ENCODE measurements at regions of chr6 and their contacts with region 1.

Region 1: GRCh38 chr6:11064836-11065235 is 20.7 kb upstream of the ELOVL2 start:
- DNase-seq: no peak
- H3K4me3 ChIP-seq: no peak overlapping the region
- H3K27ac ChIP-seq: no peak overlapping the region
- H3K4me1 ChIP-seq: no peaks in the 10 kb centered on the region
- H3K27me3 ChIP-seq: peaks cover 0 to 8% (median 0%) of the 10 kb centered on the region in 7 donors
- CTCF ChIP-seq: no peak
- POLR2A ChIP-seq: no peak

Region 2: GRCh38 chr6:10478187-10479040 is 586.4 kb before region 1 on chr6:
- intact Hi-C with region 1: loop called (anchors 10 kb)
- DNase-seq: no peak
- H3K4me3 ChIP-seq: no peak overlapping the region
- H3K27ac ChIP-seq: no peak overlapping the region
- H3K4me1 ChIP-seq: no peaks in the 10 kb centered on the region
- H3K27me3 ChIP-seq: peaks cover 0 to 18% (median 0%) of the 10 kb centered on the region in 7 donors
- CTCF ChIP-seq: peak; percentile 29 to 75 (median 67)
- POLR2A ChIP-seq: no peak

Region 3: GRCh38 chr6:10800829-10801535 is 263.9 kb before region 1 on chr6:
- intact Hi-C with region 1: no loop called
- DNase-seq: peak; percentile 89
- H3K4me3 ChIP-seq: no peak overlapping the region
- H3K27ac ChIP-seq: no peak overlapping the region
- H3K4me1 ChIP-seq: no peaks in the 10 kb centered on the region
- H3K27me3 ChIP-seq: no peaks in the 10 kb centered on the region
- CTCF ChIP-seq: peak; percentile 75 to 97 (median 93)
- POLR2A ChIP-seq: no peak

Region 4: DNA sequence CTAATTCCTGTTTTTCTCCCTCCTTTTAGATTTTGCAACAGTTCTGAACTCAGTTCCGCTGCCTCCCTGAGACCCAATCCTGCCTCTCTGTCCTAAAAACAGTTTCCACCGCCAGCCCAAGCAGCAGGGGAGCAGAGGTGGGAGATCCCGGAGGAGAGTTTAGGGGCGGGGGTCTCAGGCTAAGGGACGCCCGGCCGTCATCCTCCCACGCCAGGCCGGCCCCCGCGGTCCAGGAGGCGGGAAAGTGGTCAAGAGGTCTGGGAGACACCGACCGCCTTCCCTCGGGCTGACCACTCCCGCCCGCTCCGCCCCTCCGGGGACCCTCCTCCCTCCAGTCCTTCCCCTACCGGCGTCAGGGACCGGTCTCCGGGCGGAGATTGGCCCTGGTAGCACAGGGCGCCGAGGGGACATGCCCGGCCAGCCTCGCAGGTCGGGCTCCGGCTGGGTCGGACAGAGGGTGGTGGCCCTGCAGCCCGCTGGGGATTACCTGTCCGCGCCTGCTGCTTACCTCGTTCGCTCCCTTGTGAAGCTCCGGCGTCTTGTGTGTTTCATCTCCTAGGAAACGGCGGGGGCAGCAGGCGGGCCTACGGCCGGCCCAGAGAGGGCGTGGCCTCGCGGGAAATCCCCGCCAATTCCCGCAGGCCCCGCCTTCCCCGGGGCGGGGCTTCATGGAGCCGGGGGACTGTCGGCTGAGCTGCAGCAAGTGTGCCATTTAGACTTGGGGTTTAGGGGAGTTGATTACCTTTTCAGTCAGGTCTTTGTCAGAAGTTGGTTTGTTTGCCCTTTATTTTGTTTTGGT is 226.6 kb before region 1 on chr6 and contains the start of gene MAK:
- intact Hi-C with region 1: no loop called
- DNase-seq: peak; percentile 95
- H3K4me3 ChIP-seq: peak within 1 kb of the TSS; percentile 40 to 81 (median 72)
- H3K27ac ChIP-seq: peak within 1 kb of the TSS in 7 of 8 donors; percentile 54 to 86 (median 70)
- H3K4me1 ChIP-seq: peaks cover 4 to 27% (median 22%) of the 10 kb centered on the region in 6 donors
- H3K27me3 ChIP-seq: peaks cover 0 to 66% (median 27%) of the 10 kb centered on the region in 7 donors
- CTCF ChIP-seq: no peak
- POLR2A ChIP-seq: no peak
- total RNA-seq, gene MAK: 0.39 to 2.2 (median 1.1) TPM

Region 5: DNA sequence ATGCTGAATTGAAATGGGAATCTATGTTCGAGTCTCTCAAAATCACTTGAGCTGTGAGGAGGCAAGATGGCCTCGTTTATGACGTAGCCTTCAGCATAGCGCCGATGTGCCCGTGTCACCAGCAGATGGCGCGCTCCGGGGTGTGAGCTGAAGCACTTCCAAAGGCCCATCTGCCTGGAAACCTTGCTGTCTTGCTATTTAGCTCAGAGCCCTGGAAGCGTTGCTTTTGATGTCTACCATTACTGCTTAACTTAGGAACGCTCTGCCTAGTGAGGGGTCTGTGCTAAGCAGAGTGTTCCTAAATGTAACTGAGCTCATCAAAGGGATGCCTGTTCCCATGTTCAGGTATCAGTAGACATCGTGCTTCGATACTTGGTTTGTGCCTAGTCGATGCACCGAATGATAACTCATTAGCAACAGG is 110.2 kb before region 1 on chr6:
- intact Hi-C with region 1: loop called (anchors 2 kb)
- DNase-seq: peak; percentile 90
- H3K4me3 ChIP-seq: no peak overlapping the region
- H3K27ac ChIP-seq: no peak overlapping the region
- H3K4me1 ChIP-seq: no peaks in the 10 kb centered on the region
- H3K27me3 ChIP-seq: peaks cover 0 to 15% (median 0%) of the 10 kb centered on the region in 7 donors
- CTCF ChIP-seq: peak in 9 of 11 experiments; percentile 44 to 84 (median 67)
- POLR2A ChIP-seq: no peak